ENCODE measurements at regions of chr14 and their contacts with region 1.

Region 1: DNA sequence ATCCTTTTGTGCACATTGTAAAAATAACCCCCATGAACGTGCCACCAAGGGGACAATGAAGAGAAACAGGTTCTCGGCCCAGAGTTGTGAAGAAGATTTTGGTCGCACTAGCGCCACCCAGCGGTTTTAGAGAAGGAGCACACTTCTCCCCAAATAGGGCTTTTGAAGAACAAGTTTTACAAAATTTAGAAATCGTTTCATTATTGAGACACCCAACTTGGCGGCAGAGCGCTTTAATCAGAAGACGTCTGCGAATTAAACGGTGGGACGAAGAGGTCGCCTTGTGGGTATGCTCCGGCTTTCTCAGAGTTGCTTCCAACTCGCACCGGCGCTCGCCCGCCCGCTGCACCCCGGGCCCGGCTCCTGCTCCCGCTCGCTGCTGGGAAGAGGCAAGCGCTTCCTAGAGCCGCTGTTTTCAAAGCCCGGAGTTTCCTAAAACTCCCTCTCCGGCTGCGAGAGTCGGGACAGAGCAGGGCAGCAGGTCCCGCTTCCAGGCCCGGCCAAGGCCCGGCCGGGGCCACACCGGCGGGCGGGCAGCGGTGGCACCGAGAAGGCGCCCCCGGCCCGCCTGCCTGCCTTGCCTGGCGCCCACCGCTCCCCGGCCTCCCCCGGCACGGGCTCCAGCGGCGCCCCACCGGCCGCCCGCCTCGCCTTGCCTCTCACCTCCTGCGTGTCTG is 673 bp downstream of the FOXA1 start:
- DNase-seq: peak; percentile 77
- ATAC-seq: peak; percentile 2
- H3K4me3 Mint-ChIP-seq: peak overlapping the region; percentile 80
- H3K27ac Mint-ChIP-seq: no peak overlapping the region
- H3K4me1 Mint-ChIP-seq: peaks cover 56% of the 10 kb centered on the region
- H3K27me3 Mint-ChIP-seq: peaks cover 95% of the 10 kb centered on the region
- CTCF ChIP-seq: peak; percentile 83

Region 2: DNA sequence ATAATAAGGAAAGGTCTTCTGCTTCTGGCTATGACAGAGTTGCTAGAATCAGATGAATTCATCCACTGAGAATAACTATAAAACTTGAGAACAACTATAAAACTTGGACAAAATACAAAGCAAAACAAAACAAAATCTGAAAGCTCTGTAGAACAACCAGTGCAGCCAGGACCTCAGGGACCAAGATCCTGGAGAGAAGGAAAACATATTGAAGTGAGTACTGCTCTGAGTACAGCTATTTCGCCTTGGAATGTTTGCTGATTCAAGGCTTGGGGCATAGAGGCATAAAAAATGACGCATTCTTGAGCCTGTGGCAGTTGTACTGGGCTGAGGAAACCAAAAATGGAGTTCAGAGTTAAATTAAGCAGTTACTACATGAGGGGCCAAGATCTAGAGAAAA is 21.0 kb before region 1 on chr14:
- CTCF ChIA-PET with region 1: interaction called, 14 read pairs
- POLR2A ChIA-PET with region 1: no interaction called
- DNase-seq: no peak
- ATAC-seq: no peak
- H3K4me3 Mint-ChIP-seq: no peak overlapping the region
- H3K27ac Mint-ChIP-seq: no peak overlapping the region
- H3K4me1 Mint-ChIP-seq: no peaks in the 10 kb centered on the region
- H3K27me3 Mint-ChIP-seq: peaks cover 47% of the 10 kb centered on the region
- CTCF ChIP-seq: no peak

Region 3: GRCh38 chr14:37623423-37623951 is 29.1 kb after region 1 on chr14:
- CTCF ChIA-PET with region 1: interaction called, 17 read pairs
- POLR2A ChIA-PET with region 1: no interaction called
- DNase-seq: no peak
- ATAC-seq: no peak
- H3K4me3 Mint-ChIP-seq: no peak overlapping the region
- H3K27ac Mint-ChIP-seq: no peak overlapping the region
- H3K4me1 Mint-ChIP-seq: peaks cover 4% of the 10 kb centered on the region
- H3K27me3 Mint-ChIP-seq: peaks cover 75% of the 10 kb centered on the region
- CTCF ChIP-seq: no peak